H1 (cell line): ENCODE measurements at regions of chr11 and their contacts with region 1.

Region 1: GRCh38 chr11:6812390-6813005 is 13.0 kb upstream of the OR6A2 start:
- DNase-seq: no peak
- H3K4me3 ChIP-seq: no peak overlapping the region
- H3K27ac ChIP-seq: no peak overlapping the region
- H3K4me1 ChIP-seq: no peaks in the 10 kb centered on the region; a peak in 1 of 7 replicates
- H3K27me3 ChIP-seq: no peaks in the 10 kb centered on the region
- CTCF ChIP-seq: peak; percentile 11 to 92 (median 77)
- EP300 ChIP-seq: no peak
- POLR2A ChIP-seq: no peak
- RAD21 ChIP-seq: peak; percentile 70 to 79

Region 2: DNA sequence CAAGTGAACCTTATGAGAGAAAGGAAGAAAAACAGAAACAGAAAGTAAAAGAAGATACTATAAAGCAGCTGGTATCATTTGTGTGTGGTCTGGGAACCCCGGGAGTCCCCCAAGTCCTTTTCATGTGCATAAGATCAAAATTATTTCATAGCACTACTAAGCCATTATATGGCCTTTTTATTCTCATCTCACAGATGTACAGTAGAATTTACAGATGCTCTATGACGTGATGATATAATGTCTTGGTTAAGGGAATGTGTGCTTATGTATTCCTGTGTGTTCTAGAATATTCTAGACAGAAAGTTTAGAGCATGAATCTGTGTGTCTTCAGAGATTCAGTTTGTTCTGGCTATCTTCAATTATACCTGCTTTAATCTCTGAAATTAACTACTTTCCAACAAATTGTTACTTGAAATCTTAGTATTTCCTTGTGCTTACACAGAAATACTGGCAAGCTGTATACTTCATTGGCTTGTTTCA is 184.7 kb before region 1 on chr11:
- CTCF ChIA-PET with region 1: no interaction called
- POLR2A ChIA-PET with region 1: no interaction called
- DNase-seq: no peak
- H3K4me3 ChIP-seq: no peak overlapping the region
- H3K27ac ChIP-seq: no peak overlapping the region
- H3K4me1 ChIP-seq: peaks cover 0 to 6% (median 2%) of the 10 kb centered on the region in 4 experiments; a peak in 3 of 7 replicates
- H3K27me3 ChIP-seq: peaks cover 13 to 43% (median 34%) of the 10 kb centered on the region in 4 experiments
- CTCF ChIP-seq: no peak
- EP300 ChIP-seq: no peak
- POLR2A ChIP-seq: no peak
- RAD21 ChIP-seq: no peak

Region 3: DNA sequence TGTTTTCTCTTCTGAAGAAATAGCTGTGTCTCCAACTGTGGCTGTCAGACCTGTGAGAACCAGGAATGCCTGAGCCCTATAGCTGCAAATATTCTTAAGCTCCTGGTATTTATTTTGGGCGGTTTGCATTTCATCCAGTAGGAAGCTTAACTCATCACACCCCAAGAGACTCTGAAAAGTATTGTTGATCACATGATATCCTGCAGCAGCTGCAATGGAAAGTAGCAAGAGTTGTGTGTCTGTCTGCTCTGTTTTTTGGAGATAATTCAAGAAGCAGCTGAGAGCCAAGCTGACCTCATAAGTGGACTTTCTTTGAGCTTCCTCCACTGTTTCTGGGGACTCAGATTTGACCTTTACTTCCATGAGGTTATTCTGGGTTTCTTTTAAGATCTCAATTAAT is 92.9 kb before region 1 on chr11:
- CTCF ChIA-PET with region 1: interaction called, 10 read pairs
- POLR2A ChIA-PET with region 1: no interaction called
- DNase-seq: no peak
- H3K4me3 ChIP-seq: no peak overlapping the region
- H3K27ac ChIP-seq: no peak overlapping the region
- H3K4me1 ChIP-seq: no peaks in the 10 kb centered on the region
- H3K27me3 ChIP-seq: no peaks in the 10 kb centered on the region
- CTCF ChIP-seq: no peak
- EP300 ChIP-seq: no peak
- POLR2A ChIP-seq: no peak
- RAD21 ChIP-seq: no peak

Region 4: GRCh38 chr11:6757373-6757967 is 55.0 kb before region 1 on chr11:
- CTCF ChIA-PET with region 1: interaction called, 34 read pairs
- POLR2A ChIA-PET with region 1: no interaction called
- DNase-seq: peak in 1 of 2 experiments; percentile 48
- H3K4me3 ChIP-seq: no peak overlapping the region
- H3K27ac ChIP-seq: no peak overlapping the region
- H3K4me1 ChIP-seq: no peaks in the 10 kb centered on the region
- H3K27me3 ChIP-seq: no peaks in the 10 kb centered on the region
- CTCF ChIP-seq: peak; percentile 10 to 81 (median 77)
- EP300 ChIP-seq: no peak
- POLR2A ChIP-seq: no peak
- RAD21 ChIP-seq: peak; percentile 71 to 80

Region 5: DNA sequence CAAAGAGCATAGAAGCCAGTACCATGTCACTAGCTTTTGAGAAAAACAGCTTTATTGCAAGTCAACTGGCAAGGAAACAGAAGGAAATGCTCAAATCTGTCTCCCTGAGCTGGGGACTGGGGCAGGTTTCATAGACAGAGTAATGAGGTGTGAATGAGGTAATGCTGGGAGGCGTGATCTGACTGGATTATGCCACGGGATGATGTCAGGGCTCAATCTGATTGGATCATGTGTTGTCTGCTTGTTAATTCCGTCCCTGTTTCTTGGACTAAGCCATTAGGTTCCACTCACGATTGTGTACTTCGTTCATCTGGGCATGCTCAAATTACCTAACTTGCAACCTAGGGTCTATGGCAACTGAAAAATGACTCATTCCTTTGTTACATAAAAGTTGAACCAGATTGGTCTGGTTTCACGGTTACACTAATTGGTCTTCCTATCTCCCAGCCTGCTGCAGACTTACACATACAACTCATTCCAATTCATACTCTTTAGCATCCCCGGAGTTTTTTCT is 12.8 kb after region 1 on chr11:
- CTCF ChIA-PET with region 1: interaction called, 24 read pairs
- POLR2A ChIA-PET with region 1: interaction called, 3 read pairs
- DNase-seq: no peak
- H3K4me3 ChIP-seq: no peak overlapping the region
- H3K27ac ChIP-seq: no peak overlapping the region
- H3K4me1 ChIP-seq: no peaks in the 10 kb centered on the region
- H3K27me3 ChIP-seq: no peaks in the 10 kb centered on the region
- CTCF ChIP-seq: no peak
- EP300 ChIP-seq: no peak
- POLR2A ChIP-seq: no peak
- RAD21 ChIP-seq: no peak

Region 6: GRCh38 chr11:6992457-6993417 is 180.2 kb after region 1 on chr11:
- CTCF ChIA-PET with region 1: interaction called, 22 read pairs
- POLR2A ChIA-PET with region 1: no interaction called
- DNase-seq: no peak
- H3K4me3 ChIP-seq: no peak overlapping the region
- H3K27ac ChIP-seq: no peak overlapping the region
- H3K4me1 ChIP-seq: no peaks in the 10 kb centered on the region
- H3K27me3 ChIP-seq: no peaks in the 10 kb centered on the region
- CTCF ChIP-seq: no peak
- EP300 ChIP-seq: no peak
- POLR2A ChIP-seq: no peak
- RAD21 ChIP-seq: no peak